ENCODE measurements at regions of chr1 and their contacts with region 1.

Region 1: GRCh38 chr1:24502709-24503058 is at the start of gene RCAN3:
- DNase-seq: peak; percentile 95
- H3K4me3 ChIP-seq: peak within 1 kb of the TSS; percentile 64
- H3K27ac ChIP-seq: peak within 1 kb of the TSS; percentile 52
- H3K4me1 ChIP-seq: no peaks in the 10 kb centered on the region
- H3K27me3 ChIP-seq: no peaks in the 10 kb centered on the region
- CTCF ChIP-seq: no peak
- total RNA-seq, gene RCAN3: 7.4 and 9.1 TPM in 2 replicates

Region 2: GRCh38 chr1:24415334-24415909 is 87.3 kb before region 1 on chr1 and contains the start of gene NIPAL3:
- CTCF ChIA-PET with region 1: interaction called, 4 read pairs
- POLR2A ChIA-PET with region 1: no interaction called
- intact Hi-C with region 1: loop called (anchors 1 kb)
- DNase-seq: peak; percentile 99
- H3K4me3 ChIP-seq: peak within 1 kb of the TSS; percentile 61
- H3K27ac ChIP-seq: no peak within 1 kb of the TSS
- H3K4me1 ChIP-seq: peaks cover 29% of the 10 kb centered on the region
- H3K27me3 ChIP-seq: no peaks in the 10 kb centered on the region
- CTCF ChIP-seq: peak; percentile 86
- total RNA-seq, gene NIPAL3: 6.5 and 7.3 TPM in 2 replicates

Region 3: GRCh38 chr1:24765308-24765988 is 262.8 kb after region 1 on chr1:
- CTCF ChIA-PET with region 1: no interaction called
- POLR2A ChIA-PET with region 1: no interaction called
- intact Hi-C with region 1: no loop called
- DNase-seq: peak; percentile 66
- H3K4me3 ChIP-seq: no peak overlapping the region
- H3K27ac ChIP-seq: peak overlapping the region; percentile 70
- H3K4me1 ChIP-seq: peaks cover 59% of the 10 kb centered on the region
- H3K27me3 ChIP-seq: no peaks in the 10 kb centered on the region
- CTCF ChIP-seq: no peak

Measured in A673 (cell line).